Ovary (tissue), 10 donors: ENCODE measurements at regions of chr13 and their contacts with region 1.

Region 1: GRCh38 chr13:75687150-75687763 is 51.1 kb downstream of the LMO7 start:
- DNase-seq: no peak
- H3K4me3 ChIP-seq: no peak overlapping the region
- H3K27ac ChIP-seq: no peak overlapping the region
- H3K4me1 ChIP-seq: peaks cover 2% of the 10 kb centered on the region
- H3K27me3 ChIP-seq: no peaks in the 10 kb centered on the region
- CTCF ChIP-seq: peak in 1 of 3 donors; percentile 21
- EP300 ChIP-seq: no peak
- POLR2A ChIP-seq: no peak

Region 2: GRCh38 chr13:76106763-76107162 is 419.5 kb after region 1 on chr13:
- intact Hi-C with region 1: no loop called
- DNase-seq: no peak
- H3K4me3 ChIP-seq: no peak overlapping the region
- H3K27ac ChIP-seq: no peak overlapping the region
- H3K4me1 ChIP-seq: no peaks in the 10 kb centered on the region
- H3K27me3 ChIP-seq: no peaks in the 10 kb centered on the region
- CTCF ChIP-seq: no peak
- EP300 ChIP-seq: no peak
- POLR2A ChIP-seq: no peak

Region 3: DNA sequence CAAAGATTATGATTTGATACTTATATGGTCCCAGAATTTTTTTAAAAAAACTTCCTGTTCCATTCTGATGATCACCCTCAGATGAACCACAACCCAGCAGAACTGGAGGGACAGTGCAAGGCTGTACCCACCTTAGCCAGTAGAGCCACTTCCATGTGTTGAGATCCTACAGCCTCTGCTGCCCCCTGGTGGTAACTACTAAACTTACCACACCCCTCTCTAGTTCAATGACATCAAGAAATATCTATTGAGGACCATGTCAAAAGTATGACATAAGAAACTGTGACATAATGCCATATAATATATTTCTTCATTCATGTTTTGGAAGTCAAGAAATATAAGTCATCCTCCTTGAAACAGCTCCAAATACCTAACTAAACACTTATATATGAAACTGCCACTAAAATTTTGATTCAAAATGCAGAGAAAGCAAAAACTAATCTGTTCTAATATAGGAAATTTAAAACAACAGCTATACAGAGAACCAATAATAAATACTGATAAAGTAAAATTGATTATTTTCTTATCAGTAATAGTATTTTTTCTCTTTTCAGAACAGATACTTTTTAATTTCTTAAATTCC is 786.4 kb after region 1 on chr13:
- intact Hi-C with region 1: loop called in 2 of 4 experiments (anchors 10 kb)
- DNase-seq: peak; percentile 55 to 81 (median 63)
- H3K4me3 ChIP-seq: no peak overlapping the region
- H3K27ac ChIP-seq: no peak overlapping the region
- H3K4me1 ChIP-seq: no peaks in the 10 kb centered on the region
- H3K27me3 ChIP-seq: no peaks in the 10 kb centered on the region
- CTCF ChIP-seq: peak; percentile 74 to 84 (median 79)
- EP300 ChIP-seq: no peak
- POLR2A ChIP-seq: no peak

Region 4: GRCh38 chr13:76903544-76904162 is 1216.4 kb after region 1 on chr13:
- intact Hi-C with region 1: loop called in 2 of 4 experiments (anchors 10 kb)
- DNase-seq: peak; percentile 23 to 69 (median 48)
- H3K4me3 ChIP-seq: no peak overlapping the region
- H3K27ac ChIP-seq: no peak overlapping the region
- H3K4me1 ChIP-seq: no peaks in the 10 kb centered on the region
- H3K27me3 ChIP-seq: no peaks in the 10 kb centered on the region
- CTCF ChIP-seq: peak; percentile 85 to 87 (median 86)
- EP300 ChIP-seq: no peak
- POLR2A ChIP-seq: no peak